GM10248 (cell line): ENCODE measurements at regions of chr3 and their contacts with region 1.

Region 1: GRCh38 chr3:138915503-138916498 is 31.1 kb downstream of the FOXL2 start:
- DNase-seq: peak; percentile 90
- CTCF ChIP-seq: peak; percentile 91

Region 2: GRCh38 chr3:138479438-138479863 is 436.4 kb before region 1 on chr3:
- CTCF ChIA-PET with region 1: interaction called, 30 read pairs
- POLR2A ChIA-PET with region 1: no interaction called
- DNase-seq: peak; percentile 53
- CTCF ChIP-seq: peak; percentile 73

Region 3: GRCh38 chr3:138640537-138640936 is 275.3 kb before region 1 on chr3:
- CTCF ChIA-PET with region 1: interaction called, 11 read pairs
- POLR2A ChIA-PET with region 1: no interaction called
- DNase-seq: no peak
- CTCF ChIP-seq: no peak

Region 4: DNA sequence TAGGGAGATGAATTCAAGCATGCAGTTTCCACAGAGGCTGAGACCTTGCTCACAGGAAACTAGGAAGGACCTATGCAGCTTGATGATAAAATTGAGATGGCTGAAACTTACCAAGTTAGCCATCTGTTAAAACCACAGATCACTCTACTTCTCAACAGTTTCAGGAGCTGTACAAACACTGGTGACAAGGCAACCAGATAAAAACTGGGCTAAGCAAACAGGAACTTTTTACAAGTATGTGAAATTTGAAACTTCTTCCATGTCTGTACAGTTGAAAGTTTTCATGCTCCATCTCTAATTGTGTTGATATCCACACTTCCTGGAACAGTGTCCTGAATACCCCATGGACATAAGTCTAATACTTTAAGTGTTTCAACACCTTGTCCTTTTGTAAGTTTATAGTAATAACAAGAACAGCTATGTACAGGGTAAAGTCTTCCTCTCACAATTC is 229.0 kb before region 1 on chr3:
- CTCF ChIA-PET with region 1: interaction called, 110 read pairs
- POLR2A ChIA-PET with region 1: no interaction called
- DNase-seq: peak; percentile 59
- CTCF ChIP-seq: no peak

Region 5: GRCh38 chr3:138732456-138732855 is 183.3 kb before region 1 on chr3:
- CTCF ChIA-PET with region 1: interaction called, 13 read pairs
- POLR2A ChIA-PET with region 1: no interaction called
- DNase-seq: no peak
- CTCF ChIP-seq: no peak

Region 6: GRCh38 chr3:138862924-138863775 is 52.7 kb before region 1 on chr3:
- CTCF ChIA-PET with region 1: interaction called, 15 read pairs
- POLR2A ChIA-PET with region 1: no interaction called
- DNase-seq: no peak
- CTCF ChIP-seq: no peak